Calu3 (cell line): ENCODE measurements at regions of chr1 and their contacts with region 1.

Region 1: DNA sequence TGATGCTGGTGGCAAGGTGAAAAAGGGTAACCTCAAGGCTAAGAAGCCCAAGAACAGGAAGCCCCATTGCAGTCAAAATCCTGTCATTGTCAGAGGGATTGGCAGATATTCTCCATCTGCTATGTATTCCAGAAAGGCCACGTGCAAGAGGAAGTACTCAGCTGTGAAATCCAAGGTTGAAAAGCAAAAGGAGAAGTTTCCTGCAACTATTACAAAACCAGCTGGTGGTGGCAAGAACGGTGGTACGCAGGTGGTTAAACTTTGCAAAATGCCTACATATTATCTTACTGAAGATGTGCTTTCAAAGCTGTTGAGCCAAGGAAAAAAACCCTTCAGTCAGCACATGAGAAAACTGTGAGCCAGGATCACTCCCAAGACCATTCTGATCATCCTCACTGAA is 13.7 kb upstream of the VPS45 start:
- DNase-seq: no peak
- H3K4me3 Mint-ChIP-seq: no peak overlapping the region
- H3K27ac Mint-ChIP-seq: no peak overlapping the region
- H3K4me1 Mint-ChIP-seq: no peaks in the 10 kb centered on the region
- H3K27me3 Mint-ChIP-seq: no peaks in the 10 kb centered on the region
- CTCF ChIP-seq: no peak

Region 2: GRCh38 chr1:149962123-149962548 is 91.8 kb before region 1 on chr1:
- CTCF ChIA-PET with region 1: interaction called, 14 read pairs
- intact Hi-C with region 1: loop called (anchors 1 kb)
- DNase-seq: peak; percentile 64
- H3K4me3 Mint-ChIP-seq: no peak overlapping the region
- H3K27ac Mint-ChIP-seq: no peak overlapping the region
- H3K4me1 Mint-ChIP-seq: no peaks in the 10 kb centered on the region
- H3K27me3 Mint-ChIP-seq: no peaks in the 10 kb centered on the region
- CTCF ChIP-seq: peak; percentile 44

Region 3: GRCh38 chr1:150009665-150010392 is 44.1 kb before region 1 on chr1:
- CTCF ChIA-PET with region 1: no interaction called
- intact Hi-C with region 1: loop called (anchors 5 kb)
- DNase-seq: no peak
- H3K4me3 Mint-ChIP-seq: peak overlapping the region; percentile 88
- H3K27ac Mint-ChIP-seq: peak overlapping the region; percentile 89
- H3K4me1 Mint-ChIP-seq: peaks cover 27% of the 10 kb centered on the region
- H3K27me3 Mint-ChIP-seq: no peaks in the 10 kb centered on the region
- CTCF ChIP-seq: no peak

Region 4: DNA sequence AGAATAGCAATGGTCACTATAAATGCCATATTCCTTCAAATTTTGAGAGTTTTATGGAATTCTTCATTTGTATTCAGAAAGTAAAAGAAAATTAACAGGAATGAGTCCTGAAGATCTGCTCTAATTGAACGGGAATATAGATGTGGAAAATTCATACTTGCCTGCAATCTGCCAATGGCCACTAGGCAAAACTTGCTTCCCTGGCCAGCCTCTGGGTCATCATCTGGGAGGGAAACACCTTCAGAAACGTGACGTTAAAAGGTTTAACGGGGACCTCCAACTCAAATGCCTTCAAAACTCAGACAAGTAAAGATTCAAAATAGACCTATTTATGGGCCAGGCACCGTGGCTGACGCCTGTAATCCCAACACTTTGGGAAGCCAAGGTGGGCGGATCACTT is 775.8 kb after region 1 on chr1:
- CTCF ChIA-PET with region 1: no interaction called
- intact Hi-C with region 1: no loop called
- DNase-seq: no peak
- H3K4me3 Mint-ChIP-seq: no peak overlapping the region
- H3K27ac Mint-ChIP-seq: no peak overlapping the region
- H3K4me1 Mint-ChIP-seq: no peaks in the 10 kb centered on the region
- H3K27me3 Mint-ChIP-seq: no peaks in the 10 kb centered on the region
- CTCF ChIP-seq: peak; percentile 18